ENCODE measurements at regions of chr11 and their contacts with region 1.

Region 1: GRCh38 chr11:102476812-102477211 is 24.2 kb upstream of the TMEM123 start:
- DNase-seq: peak; percentile 61
- H3K4me3 Mint-ChIP-seq: peak overlapping the region; percentile 17
- H3K27ac Mint-ChIP-seq: peak overlapping the region; percentile 75
- H3K4me1 Mint-ChIP-seq: peaks cover 59% of the 10 kb centered on the region
- H3K27me3 Mint-ChIP-seq: no peaks in the 10 kb centered on the region

Region 2: GRCh38 chr11:102430158-102430836 is 46.5 kb before region 1 on chr11:
- CTCF ChIA-PET with region 1: interaction called, 5 read pairs
- intact Hi-C with region 1: loop called (anchors 1 kb)
- DNase-seq: peak; percentile 86
- H3K4me3 Mint-ChIP-seq: peak overlapping the region; percentile 44
- H3K27ac Mint-ChIP-seq: peak overlapping the region; percentile 95
- H3K4me1 Mint-ChIP-seq: peaks cover 75% of the 10 kb centered on the region
- H3K27me3 Mint-ChIP-seq: no peaks in the 10 kb centered on the region

Region 3: DNA sequence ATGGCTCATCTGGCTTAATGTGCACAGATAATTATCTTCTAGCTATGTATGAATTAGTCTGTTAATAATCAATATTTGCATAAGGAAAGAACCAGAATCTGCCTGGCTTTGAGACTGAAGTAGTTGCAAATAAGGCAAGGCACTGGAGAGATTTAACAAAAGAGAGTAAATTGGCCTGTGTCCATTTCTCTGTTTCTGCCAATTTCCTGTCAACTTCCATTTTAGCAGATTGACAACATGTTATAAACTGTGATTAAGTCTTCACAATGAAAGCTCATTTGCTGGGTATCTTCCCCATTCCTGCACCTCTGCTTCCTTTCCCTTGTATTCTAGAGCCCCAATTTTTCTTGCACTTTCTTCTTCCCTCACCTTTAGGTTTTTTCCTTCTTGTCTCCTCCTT is 18.9 kb before region 1 on chr11:
- CTCF ChIA-PET with region 1: interaction called, 8 read pairs
- intact Hi-C with region 1: loop called (anchors 1 kb)
- DNase-seq: no peak
- H3K4me3 Mint-ChIP-seq: peak overlapping the region; percentile 17
- H3K27ac Mint-ChIP-seq: peak overlapping the region; percentile 64
- H3K4me1 Mint-ChIP-seq: peaks cover 74% of the 10 kb centered on the region
- H3K27me3 Mint-ChIP-seq: no peaks in the 10 kb centered on the region

Region 4: DNA sequence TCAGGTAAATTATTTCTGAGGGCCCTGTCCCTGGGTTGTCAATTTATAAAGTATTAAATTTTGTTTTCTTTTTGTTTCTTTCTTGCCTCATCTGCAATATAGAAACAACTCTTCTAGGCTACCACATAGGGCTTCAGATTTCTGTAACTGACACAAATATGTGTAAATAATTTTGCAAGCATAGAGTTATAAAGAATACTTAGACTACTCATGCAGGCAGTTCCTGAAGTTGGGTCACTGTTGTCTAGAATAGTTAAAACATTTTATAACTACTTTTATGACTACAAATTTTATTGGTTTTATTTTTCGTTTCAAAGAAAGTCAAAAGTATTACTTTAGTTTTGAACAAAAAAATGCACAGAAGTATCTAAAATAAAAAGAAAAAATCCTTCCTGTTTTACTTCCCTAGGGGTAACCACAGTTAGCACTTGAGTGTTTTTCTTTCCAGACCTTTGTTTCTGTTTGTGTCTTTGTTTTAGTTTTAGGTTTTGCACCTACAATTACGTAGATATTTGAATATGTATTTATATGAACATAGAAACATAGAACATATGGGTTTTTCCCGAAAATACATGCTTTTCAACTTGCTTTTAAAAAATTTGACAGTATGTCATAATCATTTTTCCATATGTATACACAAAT is 11.8 kb before region 1 on chr11:
- CTCF ChIA-PET with region 1: interaction called, 9 read pairs
- intact Hi-C with region 1: loop called (anchors 1 kb)
- DNase-seq: no peak
- H3K4me3 Mint-ChIP-seq: no peak overlapping the region
- H3K27ac Mint-ChIP-seq: peak overlapping the region; percentile 11
- H3K4me1 Mint-ChIP-seq: peaks cover 75% of the 10 kb centered on the region
- H3K27me3 Mint-ChIP-seq: no peaks in the 10 kb centered on the region

Region 5: GRCh38 chr11:102488208-102488607 is 11.4 kb after region 1 on chr11:
- CTCF ChIA-PET with region 1: interaction called, 18 read pairs
- intact Hi-C with region 1: loop called (anchors 1 kb)
- DNase-seq: no peak
- H3K4me3 Mint-ChIP-seq: peak overlapping the region; percentile 13
- H3K27ac Mint-ChIP-seq: peak overlapping the region; percentile 42
- H3K4me1 Mint-ChIP-seq: peaks cover 63% of the 10 kb centered on the region
- H3K27me3 Mint-ChIP-seq: no peaks in the 10 kb centered on the region

Region 6: GRCh38 chr11:102611291-102611690 is 134.5 kb after region 1 on chr11:
- CTCF ChIA-PET with region 1: no interaction called
- intact Hi-C with region 1: no loop called
- DNase-seq: no peak
- H3K4me3 Mint-ChIP-seq: no peak overlapping the region
- H3K27ac Mint-ChIP-seq: no peak overlapping the region
- H3K4me1 Mint-ChIP-seq: peaks cover 13% of the 10 kb centered on the region
- H3K27me3 Mint-ChIP-seq: no peaks in the 10 kb centered on the region

Measured in activated naive CD4-positive, alpha-beta T cell treated with anti-CD3 and anti-CD28 coated beads for 36 hours (primary cell).